ENCODE measurements at regions of chr1 and their contacts with region 1.

Region 1: GRCh38 chr1:209823143-209824041 is 4.4 kb upstream of the UTP25 start:
- DNase-seq: peak; percentile 41
- H3K27ac ChIP-seq: no peak overlapping the region
- CTCF ChIP-seq: peak; percentile 80

Region 2: DNA sequence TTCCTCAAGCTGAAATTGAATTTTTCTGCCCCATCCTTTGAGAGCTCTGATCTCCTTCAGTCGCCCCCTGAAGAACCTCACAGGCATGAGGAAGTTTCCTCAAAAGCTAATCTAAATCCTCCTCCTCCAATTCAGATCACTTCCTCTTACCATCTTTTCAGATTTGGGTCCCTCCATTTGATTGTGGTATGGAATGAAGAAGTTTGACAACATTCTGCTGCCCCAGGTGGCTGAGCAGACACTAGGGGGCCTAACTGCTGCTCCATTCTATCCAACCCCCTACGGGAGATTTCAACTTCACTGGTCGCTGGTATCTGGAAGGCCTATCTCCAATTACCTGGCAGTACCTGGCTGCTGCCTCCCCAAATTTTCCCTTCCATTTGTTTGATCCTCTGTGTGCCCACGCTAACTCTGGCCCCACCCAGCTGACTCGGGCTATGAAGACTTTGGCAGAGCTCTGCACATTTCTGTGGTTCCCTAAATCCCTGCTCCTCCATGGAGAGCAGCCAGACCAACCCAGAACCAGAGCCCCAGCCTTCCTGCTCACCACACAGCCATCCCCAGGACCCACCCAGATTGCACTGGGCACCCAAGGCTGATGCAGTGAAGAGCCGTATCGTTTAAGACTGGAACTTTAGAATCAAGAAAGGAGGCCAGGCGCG is 25.3 kb before region 1 on chr1:
- CTCF ChIA-PET with region 1: interaction called, 10 read pairs
- POLR2A ChIA-PET with region 1: interaction called, 3 read pairs
- DNase-seq: no peak
- H3K27ac ChIP-seq: no peak overlapping the region
- CTCF ChIP-seq: no peak

Region 3: DNA sequence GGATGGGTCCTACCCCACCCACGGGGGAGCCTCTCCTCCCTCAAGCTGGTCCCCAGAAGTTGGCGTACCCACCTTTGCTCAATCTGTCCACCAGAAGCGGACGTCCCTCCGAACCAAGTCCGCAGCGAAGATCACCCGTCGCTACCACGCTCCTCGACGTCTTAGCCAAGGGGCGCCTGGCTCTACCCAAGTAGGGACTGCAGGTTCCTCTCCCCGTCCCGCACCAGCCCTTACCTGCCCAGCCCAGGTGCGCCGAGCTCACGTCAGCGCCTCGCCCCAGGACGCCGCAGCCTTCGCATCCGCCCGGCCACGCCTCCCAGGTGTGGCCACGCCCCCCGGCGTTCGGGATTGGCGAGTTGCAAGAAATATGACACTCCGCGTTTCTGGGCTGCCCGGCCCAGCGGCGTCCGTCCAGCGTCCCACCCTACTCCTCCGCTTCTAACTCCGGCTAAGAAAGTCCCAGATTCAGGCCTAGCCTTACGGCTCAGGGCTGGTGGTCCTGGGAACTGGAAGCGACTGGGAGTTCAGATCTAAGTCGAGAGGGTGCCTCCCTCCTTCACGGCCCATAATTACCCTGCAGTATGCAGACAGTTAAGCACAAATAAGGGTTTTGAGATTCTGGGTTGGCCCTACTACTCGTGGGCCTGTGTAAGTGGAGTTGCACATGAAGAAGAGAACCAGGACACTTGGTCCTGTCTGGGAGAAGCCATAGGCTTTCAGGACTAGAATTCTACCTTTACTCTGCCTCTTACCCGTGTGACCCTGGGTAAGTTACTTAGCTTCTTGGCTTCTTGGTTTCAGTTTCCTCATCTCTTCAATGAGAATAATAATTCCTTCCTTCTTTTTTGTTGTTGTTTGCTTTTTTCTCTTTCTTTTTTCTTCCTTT is 17.3 kb before region 1 on chr1 and contains the start of gene IRF6:
- CTCF ChIA-PET with region 1: interaction called, 21 read pairs
- POLR2A ChIA-PET with region 1: interaction called, 6 read pairs
- DNase-seq: peak; percentile 88
- H3K27ac ChIP-seq: peak within 1 kb of the TSS; percentile 82
- CTCF ChIP-seq: no peak

Measured in RWPE1 (cell line).